CD4-positive, alpha-beta T cell (primary cell): ENCODE measurements at regions of chr1 and their contacts with region 1.

Region 1: DNA sequence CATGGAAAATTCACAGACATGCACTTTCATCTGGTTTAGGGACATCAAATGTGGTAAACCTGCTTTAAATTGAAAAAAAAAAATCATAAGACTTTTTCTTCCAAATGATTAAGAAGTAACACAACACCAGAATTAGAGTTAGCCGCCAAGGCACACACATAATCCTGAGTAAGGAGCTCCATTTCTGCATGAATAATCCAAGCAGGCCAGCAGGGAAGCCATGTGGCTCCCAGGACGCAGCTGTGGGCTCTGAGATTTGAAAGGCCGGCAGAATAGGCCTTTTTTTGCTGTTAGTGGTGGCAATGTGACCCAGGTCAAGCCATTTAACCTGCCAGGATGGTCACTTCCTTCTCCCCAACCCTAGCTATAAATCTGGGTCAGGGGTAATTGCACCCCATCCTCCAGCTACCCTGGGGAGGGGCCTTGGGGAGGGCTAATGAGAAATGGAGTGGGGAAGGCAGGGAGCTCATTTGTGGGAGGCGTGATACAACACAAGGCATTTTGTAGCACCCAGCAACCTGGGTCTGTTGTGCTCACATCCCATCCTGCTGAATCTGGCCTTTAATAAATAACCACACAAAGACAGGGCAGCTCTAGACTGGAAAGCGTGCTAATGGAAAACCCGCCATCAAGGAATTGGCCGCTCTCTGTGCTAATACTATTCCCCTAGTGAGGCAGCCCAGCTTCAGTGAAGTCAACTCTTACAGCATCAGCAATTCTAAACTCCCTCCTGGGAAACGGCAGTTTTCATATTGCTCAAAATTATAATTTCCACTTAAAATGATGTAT is 178.5 kb downstream of the RHOU start:
- DNase-seq: no peak
- ATAC-seq: no peak
- H3K4me3 ChIP-seq: no peak overlapping the region
- H3K4me3 Mint-ChIP-seq: no peak overlapping the region
- H3K27ac ChIP-seq: no peak overlapping the region
- H3K27ac Mint-ChIP-seq: no peak overlapping the region
- H3K4me1 ChIP-seq: no peaks in the 10 kb centered on the region
- H3K4me1 Mint-ChIP-seq: no peaks in the 10 kb centered on the region
- H3K27me3 ChIP-seq: no peaks in the 10 kb centered on the region
- H3K27me3 Mint-ChIP-seq: no peaks in the 10 kb centered on the region
- CTCF ChIP-seq: no peak

Region 2: DNA sequence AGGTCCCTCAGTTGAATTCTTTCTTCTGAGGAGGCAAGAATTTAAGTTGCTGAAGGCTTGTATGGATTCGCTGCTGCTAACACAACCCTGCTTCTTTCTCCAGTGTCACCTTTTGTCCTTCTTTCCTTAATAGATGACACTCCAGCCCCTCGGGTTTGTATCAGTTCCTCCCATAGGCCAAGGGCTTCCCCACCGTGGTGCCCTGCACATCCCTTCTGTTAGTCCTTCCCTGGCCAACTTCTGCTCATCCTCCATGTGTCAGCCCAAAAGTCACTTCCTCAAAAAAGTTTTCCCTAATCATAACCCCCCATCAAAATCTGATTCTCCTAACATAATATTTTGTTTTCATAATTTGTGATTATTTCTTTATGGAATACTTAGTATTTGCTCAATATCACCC is 11.9 kb after region 1 on chr1:
- CTCF ChIA-PET with region 1: no interaction called
- POLR2A ChIA-PET with region 1: no interaction called
- intact Hi-C with region 1: loop called in 1 of 2 experiments (anchors 1 kb)
- DNase-seq: no peak
- ATAC-seq: no peak
- H3K4me3 ChIP-seq: no peak overlapping the region
- H3K4me3 Mint-ChIP-seq: no peak overlapping the region
- H3K27ac ChIP-seq: no peak overlapping the region
- H3K27ac Mint-ChIP-seq: no peak overlapping the region
- H3K4me1 ChIP-seq: peaks cover 4% of the 10 kb centered on the region
- H3K4me1 Mint-ChIP-seq: peaks cover 7% of the 10 kb centered on the region
- H3K27me3 ChIP-seq: no peaks in the 10 kb centered on the region
- H3K27me3 Mint-ChIP-seq: no peaks in the 10 kb centered on the region
- CTCF ChIP-seq: no peak